CD4-positive, alpha-beta T cell (primary cell): ENCODE measurements at regions of chr15 and their contacts with region 1.

Region 1: GRCh38 chr15:63264688-63265302 is 12.6 kb upstream of the APH1B start:
- DNase-seq: no peak
- ATAC-seq: no peak
- H3K4me3 ChIP-seq: no peak overlapping the region
- H3K4me3 Mint-ChIP-seq: no peak overlapping the region
- H3K27ac ChIP-seq: no peak overlapping the region
- H3K27ac Mint-ChIP-seq: no peak overlapping the region
- H3K4me1 ChIP-seq: no peaks in the 10 kb centered on the region
- H3K4me1 Mint-ChIP-seq: peaks cover 5% of the 10 kb centered on the region
- H3K27me3 ChIP-seq: no peaks in the 10 kb centered on the region
- H3K27me3 Mint-ChIP-seq: no peaks in the 10 kb centered on the region
- CTCF ChIP-seq: no peak

Region 2: GRCh38 chr15:63226966-63227401 is 37.8 kb before region 1 on chr15:
- CTCF ChIA-PET with region 1: interaction called, 3 read pairs
- POLR2A ChIA-PET with region 1: interaction called, 3 read pairs
- intact Hi-C with region 1: loop called in 1 of 2 experiments (anchors 5 kb)
- DNase-seq: no peak
- ATAC-seq: no peak
- H3K4me3 ChIP-seq: no peak overlapping the region
- H3K4me3 Mint-ChIP-seq: no peak overlapping the region
- H3K27ac ChIP-seq: peak overlapping the region in 1 of 2 donors; percentile 4
- H3K27ac Mint-ChIP-seq: peak overlapping the region; percentile 86
- H3K4me1 ChIP-seq: peaks cover 16% of the 10 kb centered on the region
- H3K4me1 Mint-ChIP-seq: peaks cover 83% of the 10 kb centered on the region
- H3K27me3 ChIP-seq: no peaks in the 10 kb centered on the region
- H3K27me3 Mint-ChIP-seq: no peaks in the 10 kb centered on the region
- CTCF ChIP-seq: no peak

Region 3: DNA sequence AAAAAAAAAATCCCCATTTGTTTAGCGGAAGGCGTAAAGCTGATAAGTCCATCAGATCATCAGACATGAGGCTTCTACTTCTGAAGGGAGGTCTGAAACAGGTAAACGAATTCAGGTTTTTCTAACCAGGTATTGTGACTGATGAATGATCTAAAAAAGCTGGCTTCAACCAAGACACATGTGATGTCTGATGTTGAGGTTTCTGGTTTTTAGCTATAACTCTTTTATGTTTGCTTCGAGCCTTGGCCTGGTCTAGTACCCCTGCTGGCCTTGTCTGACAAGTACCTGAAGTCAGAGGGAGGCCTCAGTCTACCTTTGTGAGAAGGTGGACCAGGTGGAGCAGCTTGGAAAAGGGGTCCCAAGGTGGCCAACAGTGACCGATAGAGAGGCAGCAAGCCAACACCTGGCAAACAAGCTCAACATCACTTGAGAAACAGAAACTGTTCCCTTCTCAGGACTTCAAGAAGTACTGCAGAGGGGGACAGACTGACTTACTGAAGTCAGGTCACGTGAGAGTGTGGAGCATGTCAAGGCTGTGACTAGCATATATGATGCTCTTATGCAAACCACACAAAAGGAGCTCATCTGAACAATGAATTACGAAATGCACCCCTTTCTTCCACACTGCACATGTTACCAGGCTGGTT is 149.8 kb after region 1 on chr15:
- CTCF ChIA-PET with region 1: no interaction called
- POLR2A ChIA-PET with region 1: no interaction called
- intact Hi-C with region 1: no loop called
- DNase-seq: peak in 1 of 14 experiments; percentile 39
- ATAC-seq: peak; percentile 88
- H3K4me3 ChIP-seq: no peak overlapping the region
- H3K4me3 Mint-ChIP-seq: no peak overlapping the region
- H3K27ac ChIP-seq: no peak overlapping the region
- H3K27ac Mint-ChIP-seq: peak overlapping the region; percentile 69
- H3K4me1 ChIP-seq: peaks cover 4% of the 10 kb centered on the region
- H3K4me1 Mint-ChIP-seq: peaks cover 9% of the 10 kb centered on the region
- H3K27me3 ChIP-seq: peaks cover 0 to 4% of the 10 kb centered on the region in 2 experiments
- H3K27me3 Mint-ChIP-seq: no peaks in the 10 kb centered on the region
- CTCF ChIP-seq: no peak